Activated CD8-positive, alpha-beta T cell treated with anti-CD3 and anti-CD28 coated beads, Interleukin-2, amount 10 ng/mL, durations not matched to agents 7 days and 5 days (primary cell): ENCODE measurements at regions of chr6 and their contacts with region 1.

Region 1: GRCh38 chr6:391559-392440 is at the start of gene IRF4:
- DNase-seq: peak; percentile 77
- ATAC-seq: peak; percentile 55
- H3K4me3 Mint-ChIP-seq: peak within 1 kb of the TSS; percentile 86
- H3K27ac Mint-ChIP-seq: peak within 1 kb of the TSS; percentile 94
- H3K4me1 Mint-ChIP-seq: peaks cover 51% of the 10 kb centered on the region
- H3K27me3 Mint-ChIP-seq: no peaks in the 10 kb centered on the region
- total RNA-seq, gene IRF4: 91.2 to 95.2 TPM

Region 2: GRCh38 chr6:188821-189655 is 202.8 kb before region 1 on chr6:
- CTCF ChIA-PET with region 1: interaction called, 85 read pairs
- POLR2A ChIA-PET with region 1: interaction called, 87 read pairs
- DNase-seq: peak; percentile 91
- ATAC-seq: peak; percentile 90
- H3K4me3 Mint-ChIP-seq: no peak overlapping the region
- H3K27ac Mint-ChIP-seq: peak overlapping the region; percentile 68
- H3K4me1 Mint-ChIP-seq: peaks cover 48% of the 10 kb centered on the region
- H3K27me3 Mint-ChIP-seq: no peaks in the 10 kb centered on the region

Region 3: DNA sequence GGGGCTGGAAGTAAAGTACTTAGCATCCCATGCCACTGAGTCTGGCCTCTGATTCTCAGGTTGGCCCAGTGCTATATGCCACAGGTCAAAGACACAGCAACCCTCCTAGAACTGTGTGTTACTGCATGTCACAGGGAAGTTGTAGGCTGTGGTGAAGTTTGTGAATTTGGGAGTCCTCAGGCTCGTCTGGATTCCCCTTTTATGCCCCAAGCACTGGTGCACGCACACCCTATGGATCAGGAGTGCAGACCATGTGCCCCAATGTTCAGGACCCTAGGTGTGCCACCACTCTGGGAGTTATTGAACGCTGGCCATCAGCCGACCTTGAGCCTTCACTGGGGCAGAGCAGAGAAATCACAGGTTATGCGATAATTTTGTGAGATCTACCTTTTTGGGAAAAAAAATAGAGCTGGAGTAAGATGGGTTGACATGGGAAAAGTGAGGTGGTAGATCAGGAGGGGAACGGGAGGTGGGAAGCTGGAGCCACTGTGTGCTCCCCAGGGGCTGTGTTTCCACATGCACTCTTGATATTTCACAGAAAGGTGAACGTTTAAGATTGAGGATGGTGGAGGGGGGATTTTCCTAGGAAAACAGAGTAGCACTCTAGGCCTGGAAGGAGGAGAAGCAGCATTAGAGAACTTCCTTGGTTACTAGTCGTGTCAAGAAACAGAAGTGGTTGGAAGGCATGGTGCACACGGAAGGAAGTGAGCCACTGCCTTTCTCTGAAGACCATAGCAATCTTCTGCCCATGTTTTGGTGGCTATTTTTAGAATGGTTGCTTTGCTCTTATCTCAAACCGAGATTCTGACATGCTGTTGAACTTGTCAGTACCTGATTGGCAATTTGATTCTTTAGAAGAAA is 55.4 kb before region 1 on chr6:
- CTCF ChIA-PET with region 1: interaction called, 28 read pairs
- POLR2A ChIA-PET with region 1: interaction called, 80 read pairs
- DNase-seq: peak; percentile 56
- ATAC-seq: peak; percentile 35
- H3K4me3 Mint-ChIP-seq: peak overlapping the region; percentile 65
- H3K27ac Mint-ChIP-seq: peak overlapping the region; percentile 89
- H3K4me1 Mint-ChIP-seq: peaks cover 60% of the 10 kb centered on the region
- H3K27me3 Mint-ChIP-seq: no peaks in the 10 kb centered on the region

Region 4: GRCh38 chr6:446418-447366 is 54.9 kb after region 1 on chr6:
- CTCF ChIA-PET with region 1: interaction called, 6 read pairs
- POLR2A ChIA-PET with region 1: interaction called, 70 read pairs
- DNase-seq: peak; percentile 89
- ATAC-seq: peak; percentile 83
- H3K4me3 Mint-ChIP-seq: peak overlapping the region; percentile 52
- H3K27ac Mint-ChIP-seq: peak overlapping the region; percentile 93
- H3K4me1 Mint-ChIP-seq: peaks cover 55% of the 10 kb centered on the region
- H3K27me3 Mint-ChIP-seq: no peaks in the 10 kb centered on the region

Region 5: GRCh38 chr6:498795-499231 is 107.0 kb after region 1 on chr6:
- CTCF ChIA-PET with region 1: interaction called, 14 read pairs
- POLR2A ChIA-PET with region 1: interaction called, 40 read pairs
- DNase-seq: peak; percentile 83
- ATAC-seq: peak; percentile 79
- H3K4me3 Mint-ChIP-seq: peak overlapping the region; percentile 71
- H3K27ac Mint-ChIP-seq: peak overlapping the region; percentile 89
- H3K4me1 Mint-ChIP-seq: peaks cover 75% of the 10 kb centered on the region
- H3K27me3 Mint-ChIP-seq: no peaks in the 10 kb centered on the region